Activated T-helper 1 cell treated with anti-CD3 and anti-CD28 coated beads, Interleukin-12 subunit alpha, Interleukin-12 subunit beta, Interleukin-2, Interleukin-4 antibody, amounts not matched to agents 30 ng/mL and 10 ng/mL and 1 ng/mL, durations not matched to agents 14 hours and 24 hours and 36 hours (primary cell): ENCODE measurements at regions of chr5 and their contacts with region 1.

Region 1: GRCh38 chr5:35220967-35221366 is 9.3 kb downstream of the PRLR start:
- DNase-seq: no peak
- H3K4me3 Mint-ChIP-seq: no peak overlapping the region
- H3K27ac Mint-ChIP-seq: no peak overlapping the region
- H3K4me1 Mint-ChIP-seq: no peaks in the 10 kb centered on the region
- H3K27me3 Mint-ChIP-seq: peaks cover 4% of the 10 kb centered on the region

Region 2: GRCh38 chr5:35066260-35066795 is 154.6 kb before region 1 on chr5:
- intact Hi-C with region 1: no loop called
- DNase-seq: no peak
- H3K4me3 Mint-ChIP-seq: no peak overlapping the region
- H3K27ac Mint-ChIP-seq: no peak overlapping the region
- H3K4me1 Mint-ChIP-seq: no peaks in the 10 kb centered on the region
- H3K27me3 Mint-ChIP-seq: peaks cover 8% of the 10 kb centered on the region

Region 3: GRCh38 chr5:35244156-35244555 is 23.2 kb after region 1 on chr5:
- intact Hi-C with region 1: loop called (anchors 1 kb)
- DNase-seq: no peak
- H3K4me3 Mint-ChIP-seq: no peak overlapping the region
- H3K27ac Mint-ChIP-seq: no peak overlapping the region
- H3K4me1 Mint-ChIP-seq: no peaks in the 10 kb centered on the region
- H3K27me3 Mint-ChIP-seq: peaks cover 2% of the 10 kb centered on the region

Region 4: GRCh38 chr5:35436410-35437057 is 215.6 kb after region 1 on chr5:
- intact Hi-C with region 1: no loop called
- DNase-seq: no peak
- H3K4me3 Mint-ChIP-seq: no peak overlapping the region
- H3K27ac Mint-ChIP-seq: no peak overlapping the region
- H3K4me1 Mint-ChIP-seq: no peaks in the 10 kb centered on the region
- H3K27me3 Mint-ChIP-seq: peaks cover 28% of the 10 kb centered on the region